Activated CD8-positive, alpha-beta T cell treated with anti-CD3 and anti-CD28 coated beads for 36 hours (primary cell): ENCODE measurements at regions of chr14 and their contacts with region 1.

Region 1: GRCh38 chr14:49867831-49868723 is 15.5 kb upstream of the NEMF start:
- DNase-seq: peak; percentile 100
- ATAC-seq: peak; percentile 86
- H3K4me3 Mint-ChIP-seq: peak overlapping the region; percentile 97
- H3K27ac Mint-ChIP-seq: peak overlapping the region; percentile 98
- H3K4me1 Mint-ChIP-seq: peaks cover 28% of the 10 kb centered on the region
- H3K27me3 Mint-ChIP-seq: no peaks in the 10 kb centered on the region
- CTCF ChIP-seq: no peak

Region 2: GRCh38 chr14:49879683-49880204 is 11.7 kb after region 1 on chr14:
- CTCF ChIA-PET with region 1: interaction called, 31 read pairs
- POLR2A ChIA-PET with region 1: interaction called, 9 read pairs
- intact Hi-C with region 1: no loop called
- DNase-seq: peak; percentile 84
- ATAC-seq: peak; percentile 98
- H3K4me3 Mint-ChIP-seq: no peak overlapping the region
- H3K27ac Mint-ChIP-seq: no peak overlapping the region
- H3K4me1 Mint-ChIP-seq: peaks cover 20% of the 10 kb centered on the region
- H3K27me3 Mint-ChIP-seq: no peaks in the 10 kb centered on the region
- CTCF ChIP-seq: peak; percentile 77

Region 3: DNA sequence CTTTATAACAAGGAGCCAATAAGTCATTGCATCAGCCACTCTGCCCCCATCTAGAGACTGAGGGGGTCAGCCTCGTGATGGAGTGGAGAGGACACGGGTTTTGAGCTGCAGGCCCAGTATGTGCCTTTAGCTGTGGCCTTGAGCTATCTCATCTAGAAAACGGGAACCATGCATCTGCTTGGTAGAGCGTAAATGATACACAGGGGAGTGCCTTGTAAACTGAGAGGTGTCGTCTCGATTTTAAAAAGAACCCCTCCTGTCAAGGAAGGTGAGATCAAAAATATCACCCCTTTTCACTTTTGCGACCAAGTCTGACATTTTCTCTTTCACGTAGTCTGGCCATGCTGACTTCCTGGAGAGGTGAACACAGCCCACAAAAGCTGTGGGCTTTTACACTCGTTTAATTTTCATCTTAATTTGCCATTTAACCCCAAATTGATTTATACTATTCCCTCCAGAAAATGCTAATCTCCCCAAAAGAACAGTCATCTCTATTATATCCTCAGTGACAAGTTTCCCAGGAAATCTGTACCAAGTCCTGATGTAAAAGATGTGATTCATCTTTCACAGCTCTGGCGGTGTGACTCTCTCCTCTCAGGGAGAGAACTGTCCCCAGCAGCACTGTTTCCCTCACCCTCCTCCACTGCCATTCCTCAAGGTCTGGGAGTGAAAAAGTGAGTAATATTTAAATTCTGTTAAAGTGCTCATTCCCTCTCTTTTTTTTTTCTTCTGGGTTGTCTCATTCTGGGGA is 217.7 kb after region 1 on chr14:
- CTCF ChIA-PET with region 1: interaction called, 47 read pairs
- POLR2A ChIA-PET with region 1: interaction called, 45 read pairs
- intact Hi-C with region 1: no loop called
- DNase-seq: peak; percentile 62
- ATAC-seq: peak; percentile 24
- H3K4me3 Mint-ChIP-seq: peak overlapping the region; percentile 56
- H3K27ac Mint-ChIP-seq: peak overlapping the region; percentile 98
- H3K4me1 Mint-ChIP-seq: peaks cover 94% of the 10 kb centered on the region
- H3K27me3 Mint-ChIP-seq: no peaks in the 10 kb centered on the region
- CTCF ChIP-seq: no peak

Region 4: DNA sequence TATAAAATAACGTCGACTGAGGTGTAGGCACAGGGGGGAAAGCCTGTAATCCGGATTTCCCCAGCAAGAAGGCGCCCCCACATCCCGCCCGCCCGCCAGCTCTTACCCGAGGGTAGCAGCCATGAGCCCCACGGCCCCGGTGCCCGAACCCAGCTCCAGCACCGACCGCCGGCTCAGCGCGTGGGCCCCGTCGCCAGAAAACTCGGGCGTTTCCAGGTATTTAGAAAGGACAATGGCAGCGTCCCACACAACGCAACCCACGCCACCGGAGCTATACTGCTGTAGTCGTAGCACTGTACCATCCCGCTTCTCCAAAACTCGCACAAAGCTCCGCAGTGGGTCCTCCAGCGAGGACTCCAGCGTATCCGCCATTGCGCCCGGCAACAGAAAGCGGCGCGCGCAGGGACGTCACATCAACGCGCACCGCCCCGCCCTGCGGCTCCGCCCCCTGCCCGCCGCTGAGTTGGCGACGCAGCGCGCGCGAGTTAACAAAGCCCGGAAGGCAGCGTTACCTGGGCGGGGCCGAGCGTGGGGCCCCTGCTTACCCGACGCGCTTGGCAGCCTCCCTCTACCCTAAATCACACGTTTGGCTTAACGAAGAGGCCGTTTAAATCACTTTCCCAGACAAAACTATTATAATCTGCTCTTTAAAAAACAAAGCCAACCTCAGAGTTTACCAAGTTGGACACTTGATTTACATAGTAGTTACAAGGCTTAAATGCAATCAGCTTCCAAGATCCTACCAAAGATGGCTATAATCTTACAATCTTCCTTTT is 248.3 kb after region 1 on chr14 and contains the start of gene VCPKMT:
- CTCF ChIA-PET with region 1: interaction called, 19 read pairs
- POLR2A ChIA-PET with region 1: interaction called, 6 read pairs
- intact Hi-C with region 1: no loop called
- DNase-seq: peak; percentile 97
- ATAC-seq: peak; percentile 100
- H3K4me3 Mint-ChIP-seq: peak within 1 kb of the TSS; percentile 94
- H3K27ac Mint-ChIP-seq: peak within 1 kb of the TSS; percentile 98
- H3K4me1 Mint-ChIP-seq: peaks cover 32% of the 10 kb centered on the region
- H3K27me3 Mint-ChIP-seq: no peaks in the 10 kb centered on the region
- CTCF ChIP-seq: no peak
- total RNA-seq, gene VCPKMT: 11.4 to 11.6 TPM